CD4-positive, alpha-beta T cell (primary cell): ENCODE measurements at regions of chr3 and their contacts with region 1.

Region 1: DNA sequence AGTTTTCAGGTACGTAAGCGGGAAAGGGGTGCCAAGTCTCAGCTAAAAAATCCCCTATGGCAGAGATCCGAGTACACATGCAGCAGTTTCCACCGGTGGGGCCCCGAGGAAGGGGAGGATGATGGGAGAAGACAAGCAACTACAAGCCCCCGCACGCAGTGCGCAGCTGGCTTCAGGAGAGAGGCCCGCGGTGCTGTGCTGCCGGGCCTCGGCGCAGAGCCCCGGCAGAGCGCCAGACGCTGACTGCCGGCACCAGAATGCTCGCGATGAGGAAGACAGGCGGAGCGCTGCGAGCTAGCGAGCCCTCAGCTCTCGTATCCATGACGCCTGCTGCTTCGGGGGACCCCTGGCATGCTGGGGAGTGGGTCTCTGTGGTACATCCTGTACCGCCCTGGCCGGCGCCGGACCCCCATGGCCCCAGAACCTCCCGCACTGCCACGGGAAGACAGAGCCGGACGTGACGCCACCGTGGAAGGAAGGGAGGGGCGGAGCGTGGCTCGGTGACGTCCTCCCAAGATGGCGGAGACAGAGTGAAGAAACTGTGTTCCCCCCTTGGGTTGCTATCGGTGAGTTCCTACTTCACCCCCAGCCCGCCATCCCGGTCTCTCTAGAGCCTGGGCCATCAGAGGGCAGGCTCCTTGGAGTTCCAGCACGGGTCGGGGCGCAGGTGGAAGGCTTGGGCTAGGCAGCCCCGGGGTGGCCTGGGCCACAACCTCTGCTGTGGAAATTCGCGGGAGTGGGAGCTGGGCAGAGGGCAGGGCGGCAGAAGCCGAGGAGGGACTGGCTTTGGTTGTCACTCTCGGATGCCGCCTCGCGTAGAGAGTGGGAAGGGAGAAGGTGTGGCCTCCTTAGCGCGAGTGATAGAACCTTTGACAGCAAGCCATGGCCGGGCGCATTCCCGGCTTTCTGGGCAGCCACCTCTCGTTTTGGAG is at the start of gene MYNN:
- DNase-seq: peak; percentile 81 to 96 (median 89)
- ATAC-seq: peak; percentile 80
- H3K4me3 ChIP-seq: peak within 1 kb of the TSS; percentile 83
- H3K4me3 Mint-ChIP-seq: peak within 1 kb of the TSS; percentile 98
- H3K27ac ChIP-seq: peak within 1 kb of the TSS; percentile 98 to 100
- H3K27ac Mint-ChIP-seq: peak within 1 kb of the TSS; percentile 100
- H3K4me1 ChIP-seq: peaks cover 22% of the 10 kb centered on the region
- H3K4me1 Mint-ChIP-seq: peaks cover 69% of the 10 kb centered on the region
- H3K27me3 ChIP-seq: no peaks in the 10 kb centered on the region
- H3K27me3 Mint-ChIP-seq: peaks cover 12% of the 10 kb centered on the region
- CTCF ChIP-seq: no peak
- total RNA-seq, gene MYNN: 18.7 to 20.6 TPM

Region 2: GRCh38 chr3:168996622-168997021 is 776.5 kb before region 1 on chr3:
- CTCF ChIA-PET with region 1: no interaction called
- POLR2A ChIA-PET with region 1: no interaction called
- intact Hi-C with region 1: no loop called
- DNase-seq: no peak
- ATAC-seq: no peak
- H3K4me3 ChIP-seq: no peak overlapping the region
- H3K4me3 Mint-ChIP-seq: no peak overlapping the region
- H3K27ac ChIP-seq: no peak overlapping the region
- H3K27ac Mint-ChIP-seq: no peak overlapping the region
- H3K4me1 ChIP-seq: no peaks in the 10 kb centered on the region
- H3K4me1 Mint-ChIP-seq: no peaks in the 10 kb centered on the region
- H3K27me3 ChIP-seq: no peaks in the 10 kb centered on the region
- H3K27me3 Mint-ChIP-seq: no peaks in the 10 kb centered on the region
- CTCF ChIP-seq: no peak

Region 3: GRCh38 chr3:169759256-169759655 is 13.9 kb before region 1 on chr3:
- CTCF ChIA-PET with region 1: interaction called, 20 read pairs
- POLR2A ChIA-PET with region 1: interaction called, 85 read pairs
- intact Hi-C with region 1: loop called (anchors 2 kb)
- DNase-seq: peak in 4 of 14 experiments; percentile 5 to 66 (median 33)
- ATAC-seq: peak; percentile 53
- H3K4me3 ChIP-seq: no peak overlapping the region
- H3K4me3 Mint-ChIP-seq: peak overlapping the region; percentile 0
- H3K27ac ChIP-seq: no peak overlapping the region
- H3K27ac Mint-ChIP-seq: peak overlapping the region; percentile 1
- H3K4me1 ChIP-seq: peaks cover 17% of the 10 kb centered on the region
- H3K4me1 Mint-ChIP-seq: peaks cover 36% of the 10 kb centered on the region
- H3K27me3 ChIP-seq: no peaks in the 10 kb centered on the region
- H3K27me3 Mint-ChIP-seq: no peaks in the 10 kb centered on the region
- CTCF ChIP-seq: peak; percentile 11

Region 4: DNA sequence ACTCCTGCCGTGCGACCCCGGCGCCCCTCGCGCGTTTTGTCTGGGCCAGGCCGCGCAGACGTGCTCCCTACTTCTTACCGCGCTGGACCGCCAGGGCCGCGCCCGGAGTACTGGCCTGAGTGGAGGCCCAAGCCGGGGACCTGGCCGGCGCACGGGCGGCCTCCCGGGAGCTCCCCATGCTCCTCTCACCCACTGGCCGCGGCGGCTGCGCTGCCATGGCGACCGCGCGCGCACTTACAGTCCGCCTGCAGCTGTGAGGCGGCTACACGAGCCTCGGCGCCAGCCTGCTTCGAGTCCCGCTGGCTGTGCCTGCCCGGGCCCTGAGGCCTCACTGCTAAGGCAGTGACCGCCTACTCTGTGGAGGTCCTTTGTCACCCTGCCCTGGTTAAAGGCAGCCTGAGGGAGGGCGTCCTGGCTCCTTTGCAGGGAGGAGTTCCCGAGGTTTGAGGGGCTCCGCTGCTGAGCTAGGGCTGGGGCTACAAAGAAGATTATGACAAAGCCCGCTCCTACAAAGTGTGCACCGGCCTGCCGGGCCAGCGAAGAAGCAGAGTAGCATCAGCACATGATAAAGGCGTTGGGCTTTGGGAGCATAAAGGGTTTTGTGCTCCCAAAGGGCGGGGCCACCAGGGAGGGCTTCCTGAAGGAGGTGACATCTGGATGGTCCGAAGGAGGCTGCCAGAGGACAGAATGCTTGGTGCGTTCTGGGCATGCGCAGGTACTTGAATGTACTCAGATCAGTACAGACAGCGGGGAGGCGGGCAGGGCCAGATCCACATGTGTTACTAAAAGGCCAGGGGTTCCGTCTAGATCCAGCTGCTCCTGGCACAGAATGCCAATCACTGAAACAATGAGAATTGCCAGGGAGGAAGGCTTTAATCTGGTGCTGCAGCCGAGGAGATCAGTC is 39.4 kb after region 1 on chr3 and contains the starts of genes LRRC34 and LRRIQ4:
- CTCF ChIA-PET with region 1: no interaction called
- POLR2A ChIA-PET with region 1: interaction called, 13 read pairs
- intact Hi-C with region 1: loop called (anchors 2 to 5 kb)
- DNase-seq: peak; percentile 33 to 81 (median 53)
- ATAC-seq: peak; percentile 45
- H3K4me3 ChIP-seq: peak within 1 kb of the TSS; percentile 68
- H3K4me3 Mint-ChIP-seq: peak within 1 kb of the TSS; percentile 94
- H3K27ac ChIP-seq: no peak within 1 kb of the TSS
- H3K27ac Mint-ChIP-seq: peak within 1 kb of the TSS; percentile 43
- H3K4me1 ChIP-seq: peaks cover 27% of the 10 kb centered on the region
- H3K4me1 Mint-ChIP-seq: peaks cover 26% of the 10 kb centered on the region
- H3K27me3 ChIP-seq: no peaks in the 10 kb centered on the region
- H3K27me3 Mint-ChIP-seq: no peaks in the 10 kb centered on the region
- CTCF ChIP-seq: no peak
- total RNA-seq, gene LRRC34: 0.22 to 0.52 TPM
- total RNA-seq, gene LRRIQ4: not detected